ENCODE measurements at regions of chr5 and their contacts with region 1.

Region 1: DNA sequence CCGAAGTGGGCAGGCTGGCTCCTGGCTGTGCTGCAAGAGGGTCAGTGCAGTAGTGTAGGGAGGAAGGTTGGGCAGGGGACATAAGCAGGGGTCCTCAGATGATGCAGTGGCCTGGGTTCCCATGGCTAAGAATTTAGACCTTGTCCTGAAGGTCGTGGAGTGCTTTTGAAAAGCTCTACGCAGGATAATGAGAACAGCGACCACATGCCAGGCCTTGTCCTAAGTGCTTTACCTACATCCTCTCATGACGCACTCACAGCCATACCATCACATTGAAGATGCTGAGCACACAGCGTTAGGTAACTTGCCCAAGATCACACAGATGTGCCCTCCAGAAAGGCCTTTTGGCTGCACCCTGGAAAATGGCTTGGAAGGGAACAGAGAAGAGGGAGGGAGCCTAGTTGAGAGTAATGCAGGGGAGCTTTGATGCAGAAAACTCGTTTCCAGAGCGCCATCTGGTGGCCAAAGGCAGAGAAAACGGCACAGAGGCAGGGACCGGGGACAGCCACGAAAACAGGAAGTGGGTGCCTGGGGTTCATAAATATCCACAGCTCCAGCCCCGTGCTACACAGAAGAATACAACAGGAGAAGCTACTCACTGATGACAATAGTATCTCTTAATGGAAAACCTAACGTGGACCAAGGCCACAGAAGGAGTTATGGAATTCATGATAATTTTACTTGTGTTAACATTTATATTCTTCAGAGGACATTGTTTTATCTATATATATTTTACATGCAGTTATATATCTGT is 2.6 kb upstream of the PCDH12 start:
- DNase-seq: peak; percentile 16
- H3K4me3 ChIP-seq: no peak overlapping the region
- CTCF ChIP-seq: peak; percentile 87

Region 2: DNA sequence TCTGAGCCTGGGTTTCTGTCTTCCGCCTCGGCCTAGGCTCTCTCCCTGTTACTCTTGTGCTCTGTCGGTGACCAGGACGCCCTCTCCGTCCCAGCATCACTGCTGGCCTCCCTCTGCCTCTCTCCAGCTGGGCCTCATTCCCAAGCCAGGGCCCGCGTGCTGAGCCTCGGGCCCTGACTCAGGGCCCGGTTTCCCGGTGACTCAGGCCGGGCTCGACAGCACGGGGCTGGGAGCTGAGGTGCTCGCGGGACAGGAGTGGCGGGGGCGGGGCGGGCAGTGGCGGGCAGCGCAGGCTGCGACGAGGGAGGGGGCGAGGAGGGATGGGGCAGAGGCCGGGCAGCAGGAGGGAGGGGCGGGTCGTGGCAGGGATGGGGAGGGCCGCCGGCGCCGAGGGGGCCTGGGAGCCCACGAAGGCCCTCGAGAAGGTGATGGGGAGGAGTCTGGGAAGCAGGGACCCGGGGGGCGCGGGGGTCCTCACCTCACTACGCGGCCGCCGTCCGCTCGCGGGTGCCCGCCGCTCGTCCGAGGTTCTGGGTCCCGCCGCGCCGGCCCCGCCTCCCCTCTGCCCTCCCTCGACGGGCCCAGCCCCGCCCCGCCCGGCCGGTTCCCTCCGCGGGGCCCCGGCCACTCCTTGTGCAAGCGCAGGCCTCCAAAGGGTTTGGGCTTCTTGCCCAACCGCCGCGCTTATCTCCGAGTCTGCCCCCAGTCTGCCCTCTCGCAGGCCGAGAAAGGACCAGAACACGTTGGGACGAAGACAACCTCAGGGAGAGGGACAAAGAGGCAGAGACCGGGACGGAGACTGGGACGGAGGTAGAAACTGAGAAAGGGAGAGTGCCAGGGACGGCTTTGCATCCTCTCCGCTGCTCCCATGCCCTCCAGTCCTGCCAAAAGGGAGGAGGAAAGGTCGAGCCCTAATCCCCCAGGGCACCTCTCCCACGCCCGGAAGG is 278.7 kb before region 1 on chr5 and contains the start of gene ARAP3:
- CTCF ChIA-PET with region 1: interaction called, 50 read pairs
- POLR2A ChIA-PET with region 1: no interaction called
- DNase-seq: peak; percentile 37
- H3K4me3 ChIP-seq: peak within 1 kb of the TSS; percentile 58
- CTCF ChIP-seq: no peak

Region 3: DNA sequence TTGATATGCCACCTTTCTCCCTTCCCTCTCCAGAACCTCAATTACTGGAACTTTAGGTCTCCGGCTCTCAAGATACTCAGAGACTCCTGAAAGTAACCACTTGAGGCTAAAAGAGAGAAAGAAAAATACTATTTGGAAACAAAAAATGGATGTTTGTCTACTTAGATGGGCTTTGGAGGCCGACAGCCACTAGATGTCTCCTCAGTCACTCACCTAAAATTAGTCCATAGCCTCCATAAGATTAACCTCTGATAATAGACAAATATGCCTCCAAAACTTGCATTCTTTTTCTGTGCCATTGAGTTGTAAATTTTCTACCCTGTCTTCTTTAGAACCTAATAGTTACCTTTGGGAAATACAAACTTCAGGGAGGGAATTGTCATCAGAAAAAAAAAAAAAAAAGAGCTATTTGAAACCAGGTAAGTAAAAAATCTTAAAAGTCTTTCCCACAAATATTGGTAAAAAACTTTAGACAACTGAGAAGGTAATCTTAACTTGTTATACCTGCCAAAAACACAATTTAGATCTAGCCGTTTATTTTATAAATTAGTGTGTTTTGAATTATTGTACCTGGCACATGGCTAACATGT is 71.2 kb before region 1 on chr5:
- CTCF ChIA-PET with region 1: interaction called, 68 read pairs
- POLR2A ChIA-PET with region 1: no interaction called
- DNase-seq: no peak
- H3K4me3 ChIP-seq: no peak overlapping the region
- CTCF ChIP-seq: peak; percentile 26

Region 4: GRCh38 chr5:141914199-141914743 is 46.4 kb before region 1 on chr5:
- CTCF ChIA-PET with region 1: interaction called, 10 read pairs
- POLR2A ChIA-PET with region 1: no interaction called
- DNase-seq: no peak
- H3K4me3 ChIP-seq: peak overlapping the region; percentile 37
- CTCF ChIP-seq: peak; percentile 26

Region 5: DNA sequence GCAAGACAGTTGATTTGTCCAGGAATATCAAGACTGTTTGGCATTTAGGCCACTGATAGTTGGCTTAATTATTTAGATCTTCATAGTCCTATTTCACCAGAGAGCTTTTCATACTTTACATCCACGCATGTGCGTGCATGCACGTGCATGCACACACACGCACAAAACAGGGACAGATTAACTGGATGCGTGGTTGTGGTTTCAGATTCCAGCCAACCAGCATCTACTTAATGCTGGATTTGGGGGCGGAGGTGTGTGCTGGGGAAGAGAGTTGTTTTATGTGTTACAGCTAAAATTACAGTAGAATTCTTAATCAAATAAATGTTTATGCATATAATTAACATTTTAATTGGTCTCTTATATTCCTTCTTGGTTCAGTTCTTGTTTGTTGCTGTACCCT is 15.6 kb after region 1 on chr5:
- CTCF ChIA-PET with region 1: interaction called, 127 read pairs
- POLR2A ChIA-PET with region 1: no interaction called
- DNase-seq: no peak
- H3K4me3 ChIP-seq: no peak overlapping the region
- CTCF ChIP-seq: no peak

Region 6: DNA sequence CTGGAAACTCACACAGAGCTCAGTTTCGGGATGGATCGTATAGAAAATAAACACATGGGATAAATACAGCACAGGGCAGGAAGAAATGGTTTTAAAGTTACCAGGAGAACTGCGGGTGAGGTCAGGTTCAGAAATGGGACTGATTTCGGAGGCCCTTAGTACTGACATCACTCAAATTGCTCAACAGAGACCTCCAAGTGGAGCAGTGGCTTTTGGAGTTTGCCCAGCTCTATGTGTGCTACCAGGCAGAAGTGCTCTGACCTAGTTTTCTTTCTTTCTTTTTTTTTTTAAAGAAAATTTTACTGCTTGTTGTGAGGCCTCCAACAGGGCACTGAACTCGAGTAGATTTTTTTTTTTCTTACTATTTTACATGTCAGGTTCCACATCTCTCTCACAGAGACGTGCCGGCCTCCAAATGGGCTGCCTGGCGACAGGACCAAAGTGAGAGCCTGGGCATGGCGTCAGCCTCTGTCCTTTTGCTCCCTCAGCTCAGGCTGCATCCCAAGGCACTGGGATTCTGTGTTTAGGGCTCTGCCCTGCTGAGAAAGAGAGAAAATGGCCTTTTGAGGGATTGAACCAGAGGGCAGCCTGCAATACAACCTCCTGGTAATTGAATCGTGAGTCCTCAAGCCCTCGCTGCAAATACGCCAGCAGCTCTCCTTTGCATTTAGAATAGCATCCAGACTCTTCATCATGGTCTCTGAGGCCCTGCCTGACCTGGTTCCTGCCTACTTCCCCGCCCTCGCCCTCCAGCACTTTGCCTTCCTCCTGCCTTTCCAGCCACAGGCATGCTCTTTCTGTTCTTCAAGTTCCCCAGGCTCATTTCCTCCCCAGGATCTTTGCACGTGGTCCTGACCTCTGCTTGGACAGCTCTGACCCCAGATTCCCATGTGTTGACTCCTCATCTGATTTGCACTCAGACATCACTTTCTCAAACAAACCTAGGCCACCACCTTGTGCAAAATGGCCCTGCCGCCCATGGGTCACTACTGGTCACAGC is 551.7 kb after region 1 on chr5:
- CTCF ChIA-PET with region 1: no interaction called
- POLR2A ChIA-PET with region 1: no interaction called
- DNase-seq: no peak
- H3K4me3 ChIP-seq: no peak overlapping the region
- CTCF ChIP-seq: no peak